CD4-positive, alpha-beta memory T cell (primary cell): ENCODE measurements at regions of chr6 and their contacts with region 1.

Region 1: GRCh38 chr6:98845211-98846020 is 11.0 kb downstream of the POU3F2 start:
- DNase-seq: peak in 4 of 5 donors; percentile 56 to 65 (median 60)
- H3K4me3 ChIP-seq: no peak overlapping the region
- H3K4me3 Mint-ChIP-seq: peak overlapping the region; percentile 46 to 92 (median 78)
- H3K27ac ChIP-seq: no peak overlapping the region
- H3K27ac Mint-ChIP-seq: peak overlapping the region in 1 of 7 donors; percentile 38
- H3K4me1 ChIP-seq: peaks cover 22% of the 10 kb centered on the region
- H3K4me1 Mint-ChIP-seq: peaks cover 12 to 32% (median 19%) of the 10 kb centered on the region in 4 donors
- H3K27me3 ChIP-seq: peaks cover 81% of the 10 kb centered on the region
- H3K27me3 Mint-ChIP-seq: peaks cover 69 to 70% of the 10 kb centered on the region in 2 donors

Region 2: GRCh38 chr6:97068211-97068610 is 1777.2 kb before region 1 on chr6:
- CTCF ChIA-PET with region 1: no interaction called
- POLR2A ChIA-PET with region 1: no interaction called
- intact Hi-C with region 1: loop called (anchors 2 kb)
- DNase-seq: peak in 3 of 5 donors; percentile 4 to 9 (median 9)
- H3K4me3 ChIP-seq: no peak overlapping the region
- H3K4me3 Mint-ChIP-seq: no peak overlapping the region
- H3K27ac ChIP-seq: no peak overlapping the region
- H3K27ac Mint-ChIP-seq: no peak overlapping the region
- H3K4me1 ChIP-seq: no peaks in the 10 kb centered on the region
- H3K4me1 Mint-ChIP-seq: no peaks in the 10 kb centered on the region
- H3K27me3 ChIP-seq: no peaks in the 10 kb centered on the region
- H3K27me3 Mint-ChIP-seq: no peaks in the 10 kb centered on the region

Region 3: DNA sequence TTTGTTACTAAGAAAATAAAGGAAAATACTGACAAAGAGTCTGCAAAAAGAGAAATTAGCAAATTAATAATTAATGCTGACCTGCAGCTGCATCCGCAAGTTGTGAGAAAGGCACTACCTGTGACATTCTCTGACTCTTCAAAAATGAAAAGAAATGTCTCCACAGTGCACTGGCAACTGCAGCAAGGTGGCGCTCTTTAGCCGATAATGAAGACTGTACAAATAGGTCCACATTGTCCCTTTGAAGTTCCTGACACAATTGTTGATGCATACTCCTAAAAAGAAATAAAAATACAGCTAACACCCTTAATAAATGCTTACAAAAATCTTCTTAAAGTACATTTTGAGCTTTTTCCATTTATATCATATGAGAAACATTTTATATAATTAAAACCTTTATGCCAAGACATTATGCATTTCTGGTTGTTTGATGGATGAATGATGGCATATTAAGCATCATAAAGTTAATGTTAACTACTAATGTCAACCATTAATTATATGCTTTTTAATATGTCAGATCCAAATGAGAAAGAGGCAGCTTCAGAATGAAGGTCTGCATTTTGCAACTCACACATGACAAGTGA is 1658.9 kb before region 1 on chr6:
- CTCF ChIA-PET with region 1: no interaction called
- POLR2A ChIA-PET with region 1: no interaction called
- intact Hi-C with region 1: loop called (anchors 5 kb)
- DNase-seq: peak; percentile 42 to 59 (median 55)
- H3K4me3 ChIP-seq: no peak overlapping the region
- H3K4me3 Mint-ChIP-seq: no peak overlapping the region
- H3K27ac ChIP-seq: no peak overlapping the region
- H3K27ac Mint-ChIP-seq: no peak overlapping the region
- H3K4me1 ChIP-seq: no peaks in the 10 kb centered on the region
- H3K4me1 Mint-ChIP-seq: peaks cover 0 to 2% (median under 1%) of the 10 kb centered on the region in 4 donors
- H3K27me3 ChIP-seq: no peaks in the 10 kb centered on the region
- H3K27me3 Mint-ChIP-seq: no peaks in the 10 kb centered on the region

Region 4: DNA sequence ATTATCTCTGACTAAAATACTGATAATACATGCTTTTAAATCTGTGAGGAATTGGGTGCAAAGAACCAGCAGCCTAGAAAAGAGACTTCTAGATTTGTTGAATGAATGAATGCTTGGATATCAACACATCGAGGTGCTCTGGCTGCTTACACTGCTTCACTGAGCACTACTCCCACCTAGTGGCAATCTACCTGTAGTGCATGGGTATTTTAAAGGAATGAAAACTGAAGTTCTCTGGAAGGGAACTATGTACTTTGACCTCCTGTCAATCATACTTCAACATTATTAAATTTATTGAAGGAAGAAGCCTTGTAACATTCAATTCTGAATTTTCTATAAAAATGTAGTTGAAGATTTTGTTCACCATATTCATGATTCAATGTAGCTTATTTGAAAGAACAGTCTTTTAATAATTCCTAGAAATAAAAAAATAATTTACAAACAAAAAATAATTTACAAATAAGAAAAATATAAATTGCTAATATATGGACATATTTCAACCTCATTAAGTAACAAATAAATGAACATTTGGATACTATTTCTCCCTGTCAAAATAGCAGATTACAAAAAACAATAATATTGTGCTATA is 1451.2 kb before region 1 on chr6:
- CTCF ChIA-PET with region 1: no interaction called
- POLR2A ChIA-PET with region 1: no interaction called
- intact Hi-C with region 1: loop called (anchors 5 kb)
- DNase-seq: peak; percentile 40 to 58 (median 51)
- H3K4me3 ChIP-seq: no peak overlapping the region
- H3K4me3 Mint-ChIP-seq: no peak overlapping the region
- H3K27ac ChIP-seq: no peak overlapping the region
- H3K27ac Mint-ChIP-seq: no peak overlapping the region
- H3K4me1 ChIP-seq: no peaks in the 10 kb centered on the region
- H3K4me1 Mint-ChIP-seq: no peaks in the 10 kb centered on the region
- H3K27me3 ChIP-seq: no peaks in the 10 kb centered on the region
- H3K27me3 Mint-ChIP-seq: peaks cover 6 to 8% of the 10 kb centered on the region in 2 donors

Region 5: GRCh38 chr6:97497713-97498331 is 1347.6 kb before region 1 on chr6:
- CTCF ChIA-PET with region 1: interaction called, 8 read pairs
- POLR2A ChIA-PET with region 1: no interaction called
- intact Hi-C with region 1: loop called (anchors 1 kb)
- DNase-seq: peak; percentile 44 to 53 (median 46)
- H3K4me3 ChIP-seq: no peak overlapping the region
- H3K4me3 Mint-ChIP-seq: no peak overlapping the region
- H3K27ac ChIP-seq: no peak overlapping the region
- H3K27ac Mint-ChIP-seq: no peak overlapping the region
- H3K4me1 ChIP-seq: no peaks in the 10 kb centered on the region
- H3K4me1 Mint-ChIP-seq: peaks cover 0 to 3% (median 0%) of the 10 kb centered on the region in 4 donors
- H3K27me3 ChIP-seq: no peaks in the 10 kb centered on the region
- H3K27me3 Mint-ChIP-seq: peaks cover 5 to 13% of the 10 kb centered on the region in 2 donors

Region 6: GRCh38 chr6:98834060-98835031 is 11.1 kb before region 1 on chr6 and contains the start of gene POU3F2:
- CTCF ChIA-PET with region 1: interaction called, 4 read pairs
- POLR2A ChIA-PET with region 1: interaction called, 3 read pairs
- intact Hi-C with region 1: loop called (anchors 1 kb)
- DNase-seq: peak; percentile 43 to 71 (median 52)
- H3K4me3 ChIP-seq: peak within 1 kb of the TSS; percentile 56 to 61
- H3K4me3 Mint-ChIP-seq: peak within 1 kb of the TSS; percentile 86 to 99 (median 90)
- H3K27ac ChIP-seq: no peak within 1 kb of the TSS
- H3K27ac Mint-ChIP-seq: peak within 1 kb of the TSS in 3 of 7 donors; percentile 35 to 85 (median 77)
- H3K4me1 ChIP-seq: peaks cover 53% of the 10 kb centered on the region
- H3K4me1 Mint-ChIP-seq: peaks cover 26 to 65% (median 42%) of the 10 kb centered on the region in 4 donors
- H3K27me3 ChIP-seq: peaks cover 70% of the 10 kb centered on the region
- H3K27me3 Mint-ChIP-seq: peaks cover 56 to 64% of the 10 kb centered on the region in 2 donors
- total RNA-seq, gene POU3F2: not detected

Region 7: DNA sequence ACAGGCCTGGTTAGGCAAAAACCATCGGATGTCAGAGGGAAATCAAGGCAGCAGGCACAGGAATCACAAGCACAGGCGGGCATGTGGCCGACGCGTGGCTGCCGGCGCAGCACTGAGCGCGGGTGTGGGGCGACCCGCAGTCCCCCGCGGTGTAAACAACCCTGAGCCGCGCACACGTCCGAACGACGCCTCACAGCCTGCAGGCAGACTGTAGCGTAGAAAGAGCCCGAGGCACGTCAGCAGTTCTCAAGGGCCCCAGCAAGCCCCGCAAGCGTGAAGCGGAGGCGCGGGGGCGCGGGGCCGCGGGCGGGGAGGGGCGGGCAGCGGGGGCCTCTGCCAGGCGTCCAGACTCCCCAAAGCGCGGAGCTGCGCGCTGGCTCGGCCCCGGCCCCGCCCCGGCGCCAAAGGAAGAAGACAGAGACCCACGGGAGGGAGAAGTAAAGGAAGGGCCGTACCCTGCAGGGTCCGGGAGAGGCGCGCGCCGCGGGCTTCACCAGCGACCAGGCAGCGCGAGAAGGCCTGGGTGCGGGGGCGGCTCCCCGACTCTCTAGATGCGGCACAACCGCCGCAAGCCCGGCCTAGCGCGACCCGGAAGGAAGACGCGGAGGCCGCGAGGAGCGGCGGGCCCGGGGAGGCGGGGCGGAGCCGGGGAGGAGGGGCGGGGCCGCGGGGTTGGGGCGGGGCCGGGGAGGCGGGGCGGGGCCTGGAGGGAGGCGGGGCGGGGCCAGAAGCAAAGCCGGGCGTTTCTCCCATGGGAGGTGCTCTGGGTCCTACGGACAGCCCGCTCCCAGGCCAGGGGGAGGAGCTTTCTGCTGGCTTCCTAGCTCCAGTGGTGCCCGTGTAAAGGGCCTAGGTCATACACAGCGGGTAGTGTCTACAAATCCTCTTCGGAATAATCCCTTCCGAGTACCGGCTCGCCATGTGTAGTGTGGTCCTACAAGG is 102.2 kb after region 1 on chr6 and contains the start of gene FBXL4:
- CTCF ChIA-PET with region 1: no interaction called
- POLR2A ChIA-PET with region 1: no interaction called
- intact Hi-C with region 1: loop called (anchors 5 kb)
- DNase-seq: peak; percentile 75 to 81 (median 79)
- H3K4me3 ChIP-seq: peak within 1 kb of the TSS; percentile 84 to 85
- H3K4me3 Mint-ChIP-seq: peak within 1 kb of the TSS; percentile 88 to 97 (median 95)
- H3K27ac ChIP-seq: peak within 1 kb of the TSS; percentile 51
- H3K27ac Mint-ChIP-seq: peak within 1 kb of the TSS; percentile 89 to 96 (median 93)
- H3K4me1 ChIP-seq: peaks cover 26% of the 10 kb centered on the region
- H3K4me1 Mint-ChIP-seq: peaks cover 26 to 35% (median 29%) of the 10 kb centered on the region in 4 donors
- H3K27me3 ChIP-seq: no peaks in the 10 kb centered on the region
- H3K27me3 Mint-ChIP-seq: peaks cover 0 to 2% of the 10 kb centered on the region in 2 donors
- total RNA-seq, gene FBXL4: 21.6 to 22.9 TPM